Breast epithelium (tissue), 4 donors: ENCODE measurements at regions of chr3 and their contacts with region 1.

Region 1: DNA sequence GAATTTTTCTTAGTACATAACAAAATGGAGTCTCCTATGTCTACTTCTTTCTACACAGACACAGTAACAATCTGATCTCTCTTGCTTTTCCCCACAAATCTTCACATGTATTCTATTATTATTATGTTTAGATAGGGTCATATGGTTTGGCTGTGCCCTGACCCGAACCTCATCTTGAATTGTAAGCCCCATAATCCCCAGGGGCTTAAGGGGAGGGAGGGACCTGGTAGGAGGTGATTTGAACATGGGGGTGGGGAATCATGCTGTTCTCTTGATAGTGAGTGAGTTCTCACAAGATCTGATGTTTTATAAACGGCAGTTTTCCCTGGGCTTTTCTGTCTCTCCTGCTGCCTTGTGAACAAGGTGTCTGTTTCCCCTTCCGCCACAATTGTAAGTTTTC is 86.7 kb upstream of the SELENOK start:
- DNase-seq: no peak
- H3K4me3 ChIP-seq: no peak overlapping the region
- H3K27ac ChIP-seq: no peak overlapping the region
- H3K4me1 ChIP-seq: no peaks in the 10 kb centered on the region
- H3K27me3 ChIP-seq: no peaks in the 10 kb centered on the region
- CTCF ChIP-seq: no peak
- POLR2A ChIP-seq: no peak

Region 2: DNA sequence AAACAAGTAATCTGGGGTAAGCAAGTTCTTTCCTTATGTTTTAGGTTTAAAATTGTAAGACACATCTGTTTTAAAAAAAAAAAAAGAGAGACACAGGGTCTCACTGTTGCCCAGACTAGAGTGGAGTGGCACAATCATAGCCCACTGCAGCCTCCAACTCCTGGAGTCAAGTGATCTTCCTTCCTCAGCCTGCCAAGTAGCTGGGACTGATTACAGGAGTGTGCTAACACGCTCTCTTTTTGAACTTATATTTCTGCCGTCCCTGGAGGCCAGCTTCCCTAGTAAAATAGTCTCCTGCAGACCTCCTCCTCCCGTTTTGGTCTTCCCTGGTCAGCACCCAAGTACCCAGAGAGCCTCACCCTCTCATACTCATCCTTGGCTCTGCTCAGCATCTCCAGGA is 666.5 kb before region 1 on chr3:
- intact Hi-C with region 1: loop called (anchors 5 kb)
- DNase-seq: no peak
- H3K4me3 ChIP-seq: no peak overlapping the region
- H3K27ac ChIP-seq: no peak overlapping the region
- H3K4me1 ChIP-seq: no peaks in the 10 kb centered on the region
- H3K27me3 ChIP-seq: no peaks in the 10 kb centered on the region
- CTCF ChIP-seq: no peak
- POLR2A ChIP-seq: no peak

Region 3: DNA sequence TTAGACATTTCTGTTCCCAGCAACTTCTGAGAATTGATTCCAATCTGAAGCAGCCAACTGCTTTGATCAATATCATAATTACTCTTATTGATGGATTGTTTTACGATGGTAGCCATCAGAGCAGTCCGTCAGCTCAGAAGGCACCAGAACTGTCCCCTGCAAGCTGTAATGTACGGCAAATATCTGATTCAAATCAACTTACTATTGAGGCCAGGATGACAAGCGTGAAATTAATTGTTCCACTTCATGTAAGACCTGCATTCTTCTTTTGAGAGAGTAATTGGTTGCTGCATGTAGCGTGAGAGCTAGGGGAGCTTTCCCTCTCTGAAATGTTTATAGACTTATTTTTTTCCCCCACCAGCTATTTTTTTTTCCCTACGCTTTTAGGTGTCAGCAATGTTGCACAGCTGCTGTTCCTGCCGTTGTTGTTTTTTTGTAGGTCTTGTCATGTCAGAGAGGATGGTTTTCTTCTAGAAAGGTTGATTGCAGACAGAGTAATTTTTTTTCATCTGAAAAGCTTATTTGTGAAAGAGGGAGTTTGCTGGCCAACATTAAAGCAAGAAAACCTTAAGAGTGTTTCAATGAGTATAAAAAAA is 278.8 kb after region 1 on chr3:
- intact Hi-C with region 1: no loop called
- DNase-seq: no peak
- H3K4me3 ChIP-seq: no peak overlapping the region
- H3K27ac ChIP-seq: no peak overlapping the region
- H3K4me1 ChIP-seq: no peaks in the 10 kb centered on the region
- H3K27me3 ChIP-seq: peaks cover 0 to 4% of the 10 kb centered on the region in 2 donors
- CTCF ChIP-seq: no peak
- POLR2A ChIP-seq: no peak

Region 4: DNA sequence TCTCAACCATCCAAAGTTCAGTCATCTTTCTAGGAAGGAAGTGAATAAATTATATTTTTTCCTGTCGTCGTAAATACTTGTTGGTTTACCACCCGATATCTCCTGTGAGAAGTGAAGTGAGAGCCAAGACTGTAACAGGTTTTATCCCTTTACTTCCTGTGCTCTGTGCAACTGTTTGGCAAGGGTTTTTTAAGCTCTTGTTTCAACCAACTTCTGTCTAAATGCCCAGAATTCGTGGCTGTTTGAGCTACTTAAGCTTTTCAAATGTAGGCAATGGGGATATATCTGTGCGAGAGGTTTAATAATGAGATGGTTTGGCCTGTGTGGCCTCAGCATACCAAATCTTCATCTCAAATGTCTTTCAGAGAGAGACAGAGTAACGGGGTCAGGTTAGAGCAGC is 814.8 kb after region 1 on chr3:
- intact Hi-C with region 1: no loop called
- DNase-seq: no peak
- H3K4me3 ChIP-seq: no peak overlapping the region
- H3K27ac ChIP-seq: no peak overlapping the region
- H3K4me1 ChIP-seq: no peaks in the 10 kb centered on the region
- H3K27me3 ChIP-seq: no peaks in the 10 kb centered on the region
- CTCF ChIP-seq: no peak
- POLR2A ChIP-seq: no peak